Tibial artery (tissue), 4 donors: ENCODE measurements at regions of chr18 and their contacts with region 1.

Region 1: GRCh38 chr18:63963615-63964256 is 6.1 kb upstream of the SERPINB8 start:
- DNase-seq: peak in 1 of 2 donors; percentile 53
- H3K4me3 ChIP-seq: no peak overlapping the region
- H3K27ac ChIP-seq: no peak overlapping the region
- H3K4me1 ChIP-seq: no peaks in the 10 kb centered on the region
- H3K27me3 ChIP-seq: no peaks in the 10 kb centered on the region
- CTCF ChIP-seq: peak; percentile 69 to 87

Region 2: DNA sequence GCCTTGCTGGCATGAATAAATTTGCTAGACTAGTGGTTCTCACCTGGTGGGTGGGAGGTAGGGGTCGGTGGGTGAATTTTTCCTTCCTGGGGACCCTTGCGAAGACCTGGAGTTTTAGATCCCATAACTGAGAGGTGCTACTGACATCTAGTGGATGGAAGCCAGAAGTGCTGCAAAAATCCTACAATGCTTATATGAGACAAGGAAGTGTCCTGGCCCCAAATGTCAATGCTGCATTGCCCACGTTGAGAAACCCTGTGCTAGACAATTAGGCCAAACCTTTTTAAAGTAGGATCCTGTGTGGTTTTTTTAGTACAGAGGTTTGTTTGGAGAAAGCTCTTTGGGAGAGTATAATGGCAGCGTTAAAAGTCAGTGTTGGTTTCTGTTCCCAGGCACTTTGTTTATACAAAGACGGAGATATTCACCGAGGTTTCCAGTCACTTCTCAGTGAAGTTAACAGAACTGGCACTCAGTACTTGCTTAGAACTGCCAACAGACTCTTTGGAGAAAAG is 15.7 kb after region 1 on chr18:
- intact Hi-C with region 1: loop called (anchors 2 kb)
- DNase-seq: peak in 1 of 2 donors; percentile 50
- H3K4me3 ChIP-seq: peak overlapping the region; percentile 33 to 41
- H3K27ac ChIP-seq: peak overlapping the region; percentile 9 to 61
- H3K4me1 ChIP-seq: peaks cover 0 to 11% (median 4%) of the 10 kb centered on the region in 4 donors
- H3K27me3 ChIP-seq: no peaks in the 10 kb centered on the region
- CTCF ChIP-seq: peak; percentile 68 to 81

Region 3: DNA sequence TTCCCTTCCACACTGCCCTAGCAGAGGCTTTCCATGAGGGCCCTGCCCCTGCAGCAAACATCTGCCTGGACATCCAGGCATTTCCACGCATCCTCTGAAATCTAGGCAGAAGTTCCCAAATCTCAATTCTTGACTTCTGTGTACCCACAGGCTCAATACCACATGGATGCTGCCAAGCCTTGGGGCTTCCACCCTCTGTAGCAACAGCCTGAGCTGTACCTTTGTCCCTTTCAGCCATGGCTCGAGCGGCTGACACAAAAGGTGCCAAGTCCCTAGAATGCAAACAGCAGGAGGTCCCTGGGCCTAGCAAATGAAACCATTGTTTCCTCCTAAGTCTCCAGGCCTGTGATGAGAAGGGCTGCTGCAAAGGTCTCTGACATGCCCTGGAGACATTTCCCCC is 929.6 kb after region 1 on chr18:
- intact Hi-C with region 1: no loop called
- DNase-seq: no peak
- H3K4me3 ChIP-seq: no peak overlapping the region
- H3K27ac ChIP-seq: no peak overlapping the region
- H3K4me1 ChIP-seq: no peaks in the 10 kb centered on the region
- H3K27me3 ChIP-seq: no peaks in the 10 kb centered on the region
- CTCF ChIP-seq: no peak